Esophagus muscularis mucosa (tissue), 4 donors: ENCODE measurements at regions of chr3 and their contacts with region 1.

Region 1: DNA sequence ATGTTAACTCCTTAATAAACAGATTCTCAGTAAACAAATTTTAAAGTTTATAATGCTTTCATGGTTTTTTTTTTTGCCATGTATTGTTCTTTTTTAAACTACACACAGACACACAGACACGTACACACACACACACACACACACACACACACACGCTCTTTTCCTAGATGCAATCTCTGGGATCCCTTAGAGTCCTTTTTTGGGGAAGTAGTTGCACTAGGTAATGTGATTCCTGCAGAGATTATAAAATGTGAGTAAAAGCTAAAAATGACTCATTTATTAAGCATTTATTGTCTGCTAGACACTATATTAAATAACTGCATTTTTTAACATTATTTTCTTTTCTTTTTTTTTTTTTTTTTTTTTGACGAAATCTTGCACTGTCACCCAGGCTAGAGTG is 19.9 kb downstream of the NDUFB5 start:
- DNase-seq: no peak
- H3K4me3 ChIP-seq: no peak overlapping the region
- H3K27ac ChIP-seq: no peak overlapping the region
- H3K4me1 ChIP-seq: no peaks in the 10 kb centered on the region
- H3K27me3 ChIP-seq: no peaks in the 10 kb centered on the region
- CTCF ChIP-seq: no peak
- EP300 ChIP-seq: no peak
- POLR2A ChIP-seq: no peak

Region 2: GRCh38 chr3:178875836-178876235 is 748.6 kb before region 1 on chr3:
- intact Hi-C with region 1: loop called (anchors 10 kb)
- DNase-seq: no peak
- H3K4me3 ChIP-seq: no peak overlapping the region
- H3K27ac ChIP-seq: no peak overlapping the region
- H3K4me1 ChIP-seq: peaks cover 0 to 9% (median 3%) of the 10 kb centered on the region in 4 donors
- H3K27me3 ChIP-seq: no peaks in the 10 kb centered on the region
- CTCF ChIP-seq: no peak
- EP300 ChIP-seq: no peak
- POLR2A ChIP-seq: no peak

Region 3: GRCh38 chr3:179091113-179091512 is 533.3 kb before region 1 on chr3:
- intact Hi-C with region 1: no loop called
- DNase-seq: no peak
- H3K4me3 ChIP-seq: no peak overlapping the region
- H3K27ac ChIP-seq: no peak overlapping the region
- H3K4me1 ChIP-seq: no peaks in the 10 kb centered on the region
- H3K27me3 ChIP-seq: no peaks in the 10 kb centered on the region
- CTCF ChIP-seq: no peak
- EP300 ChIP-seq: no peak
- POLR2A ChIP-seq: no peak